Astrocyte of the cerebellum (primary cell): ENCODE measurements at regions of chr3 and their contacts with region 1.

Region 1: DNA sequence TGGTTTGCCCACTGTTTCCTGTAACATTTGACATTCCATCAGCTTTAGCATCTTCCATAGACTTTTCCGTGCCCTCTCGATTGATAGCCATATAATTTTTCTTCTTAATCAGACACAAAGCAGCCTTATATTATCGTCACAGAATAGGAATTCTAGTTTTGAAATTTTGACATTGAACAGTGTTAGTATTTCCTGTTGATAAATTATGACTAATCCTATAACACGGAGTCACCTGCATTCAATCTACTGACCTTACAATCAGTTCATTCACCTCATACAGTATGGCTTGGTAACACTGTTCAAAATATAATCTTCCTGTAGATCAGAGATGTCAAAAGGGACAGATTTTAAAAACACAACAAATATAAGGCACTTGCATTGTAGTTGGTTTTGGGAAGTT is 423.7 kb downstream of the C3orf38 start:
- DNase-seq: no peak
- H3K4me3 ChIP-seq: no peak overlapping the region
- CTCF ChIP-seq: no peak

Region 2: DNA sequence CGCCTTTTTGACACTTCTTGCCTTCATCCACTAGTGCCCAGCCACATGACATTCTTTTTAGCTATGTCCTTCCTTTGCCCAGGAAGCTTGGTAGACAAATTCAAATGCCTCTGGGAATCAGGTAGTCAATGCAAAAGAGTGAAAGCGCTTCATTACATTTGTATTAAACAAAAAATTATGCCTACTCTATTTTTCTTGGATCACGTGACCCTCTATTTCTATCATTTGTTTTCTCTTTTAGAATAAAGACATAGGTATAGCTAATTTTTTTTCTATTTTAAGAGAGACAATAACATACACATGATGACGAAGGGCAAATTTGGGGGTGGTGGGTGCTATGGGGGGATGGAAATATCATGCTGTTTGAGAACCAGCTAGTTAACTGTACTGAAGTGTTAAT is 38.9 kb before region 1 on chr3:
- in situ Hi-C with region 1: loop called (anchors 5 kb)
- DNase-seq: no peak
- H3K4me3 ChIP-seq: no peak overlapping the region
- CTCF ChIP-seq: no peak

Region 3: DNA sequence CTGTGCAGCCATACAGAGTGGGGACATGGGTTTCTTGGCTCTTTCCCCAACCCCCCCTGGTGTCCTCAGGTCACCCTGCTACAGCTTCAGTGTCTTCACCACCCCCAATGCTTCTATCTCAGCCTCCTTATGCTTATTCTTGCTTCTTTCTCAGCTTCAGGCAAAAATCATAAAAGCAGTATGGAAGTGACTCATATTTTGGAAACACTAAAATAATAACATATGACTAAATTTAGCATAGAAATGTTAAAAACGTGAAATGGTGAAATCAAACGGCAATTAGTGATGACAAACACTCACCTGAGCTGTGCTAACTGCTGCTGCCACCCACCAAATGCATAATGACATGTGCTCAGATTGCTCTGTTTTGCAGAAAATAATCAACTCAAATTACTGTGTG is 58.8 kb after region 1 on chr3:
- in situ Hi-C with region 1: no loop called
- DNase-seq: no peak
- H3K4me3 ChIP-seq: no peak overlapping the region
- CTCF ChIP-seq: no peak